GM12878 (cell line): ENCODE measurements at regions of chr6 and their contacts with region 1.

Region 1: DNA sequence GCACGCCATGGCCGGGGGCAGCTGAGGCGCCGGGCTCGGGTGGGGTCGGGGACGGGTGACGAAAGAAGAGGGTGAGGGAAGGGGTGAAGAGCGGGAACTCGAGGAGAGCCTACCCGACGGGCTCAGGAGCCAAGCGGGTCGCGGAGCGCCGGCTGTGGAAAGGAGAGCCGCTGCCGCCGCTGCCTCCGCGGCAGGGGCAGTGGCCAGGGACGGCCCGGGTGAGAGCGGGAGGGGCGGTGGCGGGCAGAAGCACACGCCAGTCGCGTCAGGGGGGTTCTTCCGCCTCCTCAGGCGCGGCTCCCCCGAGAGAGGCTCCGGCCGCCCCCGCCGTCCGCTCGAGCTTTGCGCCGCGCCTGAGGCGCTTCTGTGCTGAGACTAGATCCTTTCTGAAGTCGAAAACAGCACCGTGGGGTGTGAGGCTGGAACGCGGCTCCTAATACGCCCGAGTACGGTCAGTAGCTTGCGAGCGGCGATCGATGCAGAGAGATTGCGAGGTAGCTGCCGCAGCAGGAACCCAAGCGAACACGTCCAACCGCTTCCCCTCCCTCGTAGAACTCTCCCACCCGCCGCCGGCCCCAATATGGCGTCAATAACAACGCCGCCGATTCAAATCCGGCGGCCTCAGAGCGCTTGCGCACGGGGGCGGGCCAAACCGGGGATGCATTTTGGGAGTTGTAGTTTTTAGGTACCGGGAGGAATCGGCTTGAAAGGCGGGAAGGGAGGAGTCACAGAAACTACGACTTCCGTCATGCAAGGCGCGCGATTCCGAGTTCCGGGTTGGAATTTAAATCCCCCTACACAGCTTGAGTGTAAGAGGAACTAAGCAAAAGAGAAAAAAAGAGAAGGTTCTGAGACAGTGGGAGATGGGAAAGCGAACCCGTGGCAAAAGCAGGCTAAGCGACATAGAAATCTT is at the start of gene AKIRIN2:
- DNase-seq: peak; percentile 97
- ATAC-seq: peak; percentile 73
- H3K4me3 ChIP-seq: peak within 1 kb of the TSS; percentile 96
- H3K27ac ChIP-seq: peak within 1 kb of the TSS; percentile 97
- H3K4me1 ChIP-seq: peaks cover 33% of the 10 kb centered on the region
- H3K27me3 ChIP-seq: no peaks in the 10 kb centered on the region
- CTCF ChIP-seq: no peak
- EP300 ChIP-seq: no peak
- POLR2A ChIP-seq: peak; percentile 94
- RAD21 ChIP-seq: no peak
- polyA plus RNA-seq, gene AKIRIN2: 12.7 to 16.8 TPM

Region 2: GRCh38 chr6:87040729-87041128 is 661.2 kb before region 1 on chr6:
- CTCF ChIA-PET with region 1: no interaction called
- POLR2A ChIA-PET with region 1: no interaction called
- RAD21 ChIA-PET with region 1: no interaction called
- SMC1A ChIA-PET with region 1: no interaction called
- in situ Hi-C with region 1: no loop called
- intact Hi-C with region 1: no loop called
- DNase-seq: no peak
- ATAC-seq: no peak
- H3K4me3 ChIP-seq: no peak overlapping the region
- H3K27ac ChIP-seq: no peak overlapping the region
- H3K4me1 ChIP-seq: no peaks in the 10 kb centered on the region
- H3K27me3 ChIP-seq: no peaks in the 10 kb centered on the region; a peak in 1 of 4 replicates
- CTCF ChIP-seq: no peak
- EP300 ChIP-seq: no peak
- POLR2A ChIP-seq: no peak
- RAD21 ChIP-seq: no peak

Region 3: GRCh38 chr6:87393022-87393622 is 308.8 kb before region 1 on chr6:
- CTCF ChIA-PET with region 1: no interaction called
- POLR2A ChIA-PET with region 1: interaction called, 3 read pairs
- RAD21 ChIA-PET with region 1: interaction called, 7 read pairs
- SMC1A ChIA-PET with region 1: interaction called, 11 read pairs
- in situ Hi-C with region 1: no loop called
- intact Hi-C with region 1: no loop called
- DNase-seq: no peak
- ATAC-seq: peak; percentile 84
- H3K4me3 ChIP-seq: no peak overlapping the region
- H3K27ac ChIP-seq: no peak overlapping the region
- H3K4me1 ChIP-seq: no peaks in the 10 kb centered on the region
- H3K27me3 ChIP-seq: no peaks in the 10 kb centered on the region
- CTCF ChIP-seq: peak; percentile 55 to 63 (median 58); a peak in 5 of 6 replicates
- EP300 ChIP-seq: no peak
- POLR2A ChIP-seq: no peak
- RAD21 ChIP-seq: peak; percentile 78

Region 4: GRCh38 chr6:87714093-87714809 is 12.3 kb after region 1 on chr6:
- CTCF ChIA-PET with region 1: interaction called, 13 read pairs
- POLR2A ChIA-PET with region 1: interaction called, 12 read pairs
- RAD21 ChIA-PET with region 1: interaction called, 14 read pairs
- SMC1A ChIA-PET with region 1: interaction called, 14 read pairs
- in situ Hi-C with region 1: no loop called
- intact Hi-C with region 1: no loop called
- DNase-seq: no peak
- ATAC-seq: peak; percentile 87
- H3K4me3 ChIP-seq: no peak overlapping the region
- H3K27ac ChIP-seq: peak overlapping the region; percentile 4; the same call in 1 of the 2 replicates
- H3K4me1 ChIP-seq: peaks cover 5% of the 10 kb centered on the region
- H3K27me3 ChIP-seq: no peaks in the 10 kb centered on the region
- CTCF ChIP-seq: no peak
- EP300 ChIP-seq: peak in 1 of 2 experiments; percentile 40; a peak in 1 of 4 replicates
- POLR2A ChIP-seq: no peak
- RAD21 ChIP-seq: no peak

Region 5: GRCh38 chr6:87747646-87748045 is 45.7 kb after region 1 on chr6:
- CTCF ChIA-PET with region 1: interaction called, 3 read pairs
- POLR2A ChIA-PET with region 1: no interaction called
- RAD21 ChIA-PET with region 1: interaction called, 7 read pairs
- SMC1A ChIA-PET with region 1: interaction called, 10 read pairs
- in situ Hi-C with region 1: no loop called
- intact Hi-C with region 1: no loop called
- DNase-seq: no peak
- ATAC-seq: peak; percentile 88
- H3K4me3 ChIP-seq: no peak overlapping the region
- H3K27ac ChIP-seq: no peak overlapping the region
- H3K4me1 ChIP-seq: peaks cover 12% of the 10 kb centered on the region
- H3K27me3 ChIP-seq: no peaks in the 10 kb centered on the region
- CTCF ChIP-seq: no peak
- EP300 ChIP-seq: no peak; a peak in 1 of 4 replicates
- POLR2A ChIP-seq: no peak
- RAD21 ChIP-seq: no peak

Region 6: GRCh38 chr6:87808005-87808757 is 106.2 kb after region 1 on chr6:
- CTCF ChIA-PET with region 1: interaction called, 5 read pairs
- POLR2A ChIA-PET with region 1: interaction called, 8 read pairs
- RAD21 ChIA-PET with region 1: interaction called, 6 read pairs
- SMC1A ChIA-PET with region 1: interaction called, 41 read pairs
- in situ Hi-C with region 1: no loop called
- intact Hi-C with region 1: no loop called
- DNase-seq: no peak
- ATAC-seq: peak; percentile 45
- H3K4me3 ChIP-seq: no peak overlapping the region
- H3K27ac ChIP-seq: peak overlapping the region; percentile 43
- H3K4me1 ChIP-seq: peaks cover 27% of the 10 kb centered on the region
- H3K27me3 ChIP-seq: no peaks in the 10 kb centered on the region
- CTCF ChIP-seq: no peak
- EP300 ChIP-seq: no peak
- POLR2A ChIP-seq: no peak
- RAD21 ChIP-seq: no peak

Region 7: GRCh38 chr6:87897663-87898062 is 195.7 kb after region 1 on chr6:
- CTCF ChIA-PET with region 1: no interaction called
- POLR2A ChIA-PET with region 1: no interaction called
- RAD21 ChIA-PET with region 1: no interaction called
- SMC1A ChIA-PET with region 1: no interaction called
- in situ Hi-C with region 1: no loop called
- intact Hi-C with region 1: no loop called
- DNase-seq: no peak
- ATAC-seq: no peak
- H3K4me3 ChIP-seq: no peak overlapping the region
- H3K27ac ChIP-seq: no peak overlapping the region
- H3K4me1 ChIP-seq: no peaks in the 10 kb centered on the region; the same call in 1 of the 2 replicates
- H3K27me3 ChIP-seq: no peaks in the 10 kb centered on the region
- CTCF ChIP-seq: no peak
- EP300 ChIP-seq: no peak
- POLR2A ChIP-seq: no peak
- RAD21 ChIP-seq: no peak

Region 8: DNA sequence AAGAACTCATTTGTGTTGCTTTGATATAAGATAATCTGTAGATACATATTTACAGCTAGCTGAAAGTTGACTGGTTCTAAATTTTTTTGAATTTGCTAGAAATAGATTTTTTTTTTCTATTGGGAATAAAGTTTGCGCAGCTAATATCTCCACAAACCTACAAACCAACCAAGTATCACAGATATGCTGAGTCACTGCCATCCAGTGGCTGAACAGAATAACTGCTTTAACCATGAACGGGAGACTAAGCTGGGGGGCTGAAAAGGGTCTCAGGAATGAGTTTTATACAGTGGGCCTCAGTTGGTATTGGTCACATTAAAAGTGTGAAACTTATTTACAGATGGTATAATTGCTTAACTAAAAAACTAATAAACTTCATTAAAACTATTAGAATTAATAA is 790.9 kb after region 1 on chr6:
- CTCF ChIA-PET with region 1: no interaction called
- POLR2A ChIA-PET with region 1: no interaction called
- RAD21 ChIA-PET with region 1: no interaction called
- SMC1A ChIA-PET with region 1: no interaction called
- in situ Hi-C with region 1: no loop called
- intact Hi-C with region 1: loop called (anchors 10 kb)
- DNase-seq: no peak
- ATAC-seq: no peak
- H3K4me3 ChIP-seq: no peak overlapping the region
- H3K27ac ChIP-seq: peak overlapping the region; percentile 91
- H3K4me1 ChIP-seq: peaks cover 16% of the 10 kb centered on the region
- H3K27me3 ChIP-seq: no peaks in the 10 kb centered on the region
- CTCF ChIP-seq: peak; percentile 10 to 27 (median 15); a peak in 2 of 6 replicates
- EP300 ChIP-seq: no peak
- POLR2A ChIP-seq: no peak
- RAD21 ChIP-seq: peak; percentile 52